Heart left ventricle (tissue), 16 donors: ENCODE measurements at regions of chr16 and their contacts with region 1.

Region 1: DNA sequence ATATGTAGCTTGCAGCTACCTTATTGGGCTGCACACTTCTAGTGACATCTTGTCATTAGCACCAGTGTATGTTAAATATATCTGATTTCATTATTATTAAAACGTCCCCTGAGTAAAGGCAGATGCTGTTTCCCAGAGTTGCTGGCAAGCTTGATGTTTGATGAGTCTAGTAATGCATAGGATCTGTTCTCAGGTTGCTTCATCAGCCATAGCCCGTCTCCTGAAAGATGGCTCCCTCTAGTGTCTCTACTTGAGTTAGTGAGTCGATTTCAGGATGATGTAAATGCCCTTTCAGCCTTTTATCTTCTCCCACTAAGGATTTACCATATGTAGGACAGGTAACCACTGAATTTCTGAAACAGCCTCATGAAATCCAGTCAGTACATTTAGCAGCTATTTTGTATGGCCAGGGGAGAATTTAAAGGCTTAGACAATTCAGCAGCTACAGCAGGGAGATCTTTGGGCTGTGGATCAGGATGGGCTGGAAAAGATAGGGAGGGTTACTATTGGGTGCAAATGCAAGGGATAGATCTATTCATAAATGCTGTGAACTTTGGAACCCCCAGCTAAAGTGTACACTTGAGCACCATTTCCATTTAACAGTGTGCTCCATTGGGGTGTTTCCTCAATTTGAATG is 376.3 kb downstream of the CNTNAP4 start:
- DNase-seq: no peak
- ATAC-seq: no peak
- H3K4me3 ChIP-seq: no peak overlapping the region
- H3K27ac ChIP-seq: no peak overlapping the region
- H3K4me1 ChIP-seq: no peaks in the 10 kb centered on the region
- H3K27me3 ChIP-seq: peaks cover 0 to 5% (median 0%) of the 10 kb centered on the region in 9 donors
- CTCF ChIP-seq: peak in 9 of 12 donors; percentile 28 to 52 (median 33)
- POLR2A ChIP-seq: no peak

Region 2: DNA sequence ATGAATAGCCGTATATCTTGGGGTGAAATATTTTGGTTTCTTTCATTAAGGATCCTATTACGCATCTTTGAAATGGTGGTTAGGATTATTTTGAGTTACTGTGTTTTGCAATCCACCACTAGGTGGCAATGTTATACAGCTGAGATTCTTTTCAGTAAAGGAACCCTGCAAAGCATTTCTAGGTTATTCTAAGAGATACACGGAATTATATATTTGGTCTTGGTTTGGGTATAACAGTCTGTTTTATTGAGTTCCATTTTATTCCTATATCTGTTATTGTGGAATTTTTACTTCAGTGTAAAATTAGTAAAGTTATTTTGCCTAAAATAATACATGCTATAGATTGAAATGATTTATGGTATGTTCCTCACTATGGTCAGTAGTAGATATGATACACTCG is 864.3 kb before region 1 on chr16:
- intact Hi-C with region 1: loop called in 1 of 10 experiments (anchors 5 kb)
- DNase-seq: no peak
- ATAC-seq: peak in 2 of 4 donors; percentile 39 to 47
- H3K4me3 ChIP-seq: no peak overlapping the region
- H3K27ac ChIP-seq: no peak overlapping the region
- H3K4me1 ChIP-seq: no peaks in the 10 kb centered on the region
- H3K27me3 ChIP-seq: peaks cover 0 to 19% (median 5%) of the 10 kb centered on the region in 9 donors
- CTCF ChIP-seq: peak; percentile 70 to 89 (median 83)
- POLR2A ChIP-seq: no peak

Region 3: DNA sequence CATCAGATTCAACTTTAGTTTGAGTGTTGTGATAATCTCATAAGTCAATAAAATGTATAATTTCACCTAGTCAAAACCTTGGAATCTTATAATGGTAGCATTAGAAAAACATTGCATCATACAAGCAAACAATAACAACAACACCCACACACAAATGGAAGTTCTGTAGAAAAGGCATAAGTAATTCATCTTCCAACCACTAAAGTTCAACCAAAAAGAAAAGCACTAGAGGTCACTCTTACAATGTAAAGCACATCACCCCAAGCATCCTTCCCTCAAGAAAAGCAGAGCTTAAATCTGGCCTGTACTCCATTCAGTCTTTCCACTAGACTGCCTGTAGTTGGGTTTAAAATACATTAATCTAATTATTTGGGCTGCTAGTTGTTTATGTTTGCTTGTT is 374.5 kb before region 1 on chr16:
- intact Hi-C with region 1: loop called in 3 of 10 experiments (anchors 5 to 10 kb)
- DNase-seq: no peak
- ATAC-seq: no peak
- H3K4me3 ChIP-seq: no peak overlapping the region
- H3K27ac ChIP-seq: no peak overlapping the region
- H3K4me1 ChIP-seq: no peaks in the 10 kb centered on the region
- H3K27me3 ChIP-seq: peaks cover 0 to 9% (median 0%) of the 10 kb centered on the region in 9 donors
- CTCF ChIP-seq: peak in 7 of 12 donors; percentile 14 to 32 (median 23)
- POLR2A ChIP-seq: no peak